Endothelial cell of umbilical vein (primary cell): ENCODE measurements at regions of chr1 and their contacts with region 1.

Region 1: DNA sequence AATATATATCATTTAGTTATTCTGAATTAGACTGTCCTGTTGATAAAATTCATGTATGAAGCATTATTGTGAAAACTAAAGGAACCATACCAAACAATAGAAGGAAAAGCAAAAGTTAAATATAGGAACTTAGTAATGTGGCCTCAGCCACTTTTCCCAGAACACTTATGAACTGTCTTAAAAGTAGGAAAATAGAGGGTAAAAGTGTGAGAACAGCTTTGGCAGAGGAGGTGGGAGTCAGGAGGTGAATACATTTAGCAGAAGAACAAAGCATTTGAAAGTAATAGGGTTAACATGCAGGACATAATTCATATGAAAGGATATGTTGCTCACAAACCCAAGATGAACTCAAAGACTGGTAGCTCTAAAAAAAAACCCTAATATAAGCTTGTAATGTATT is 121.9 kb downstream of the KCNT2 start:
- DNase-seq: peak; percentile 94
- H3K4me3 ChIP-seq: no peak overlapping the region
- H3K27ac ChIP-seq: no peak overlapping the region
- H3K4me1 ChIP-seq: peaks cover 5% of the 10 kb centered on the region
- H3K27me3 ChIP-seq: no peaks in the 10 kb centered on the region
- CTCF ChIP-seq: no peak
- POLR2A ChIP-seq: no peak

Region 2: DNA sequence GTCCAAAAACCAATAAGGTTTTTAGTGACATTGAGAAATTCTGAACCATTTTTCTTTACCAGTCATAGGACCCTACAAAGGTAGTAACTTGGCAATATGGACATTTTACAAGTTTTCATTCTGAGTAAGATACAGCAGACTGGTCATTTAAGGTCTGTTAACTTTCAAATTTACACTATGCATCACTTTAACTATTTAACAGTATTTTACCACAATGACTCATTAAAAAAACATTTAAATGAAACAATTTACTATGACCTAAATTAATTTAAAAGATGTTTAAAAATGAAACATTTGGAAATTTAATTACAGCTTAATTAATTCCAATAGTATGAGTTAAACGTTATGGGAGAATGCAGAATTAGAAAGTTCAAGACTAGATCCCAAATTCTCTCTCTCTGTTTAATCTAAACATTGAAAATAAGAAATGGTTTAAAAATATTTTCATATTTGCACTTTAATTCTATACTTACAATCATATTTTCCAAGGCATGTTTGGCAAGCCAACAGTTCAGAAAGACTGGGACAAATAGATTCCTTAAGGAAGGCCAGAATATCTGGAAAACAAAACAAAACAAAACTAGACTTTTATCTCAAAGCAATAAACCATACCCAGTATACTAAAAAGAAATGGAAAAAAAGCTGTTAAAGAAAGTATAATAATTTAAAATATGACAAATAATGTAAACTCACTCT is 19.0 kb before region 1 on chr1:
- CTCF ChIA-PET with region 1: no interaction called
- POLR2A ChIA-PET with region 1: no interaction called
- dilution Hi-C with region 1: no loop called
- intact Hi-C with region 1: no loop called
- DNase-seq: no peak
- H3K4me3 ChIP-seq: no peak overlapping the region
- H3K27ac ChIP-seq: no peak overlapping the region
- H3K4me1 ChIP-seq: no peaks in the 10 kb centered on the region
- H3K27me3 ChIP-seq: no peaks in the 10 kb centered on the region
- CTCF ChIP-seq: no peak
- POLR2A ChIP-seq: no peak

Region 3: GRCh38 chr1:196608390-196609369 is 122.3 kb after region 1 on chr1 and contains the start of gene KCNT2:
- CTCF ChIA-PET with region 1: no interaction called
- POLR2A ChIA-PET with region 1: no interaction called
- dilution Hi-C with region 1: no loop called
- intact Hi-C with region 1: loop called (anchors 5 kb)
- DNase-seq: peak; percentile 86
- H3K4me3 ChIP-seq: peak within 1 kb of the TSS; percentile 68 to 79 (median 69)
- H3K27ac ChIP-seq: no peak within 1 kb of the TSS
- H3K4me1 ChIP-seq: peaks cover 10% of the 10 kb centered on the region
- H3K27me3 ChIP-seq: no peaks in the 10 kb centered on the region
- CTCF ChIP-seq: peak in 1 of 2 donors; percentile 3
- POLR2A ChIP-seq: no peak
- total RNA-seq, gene KCNT2: 1.4 and 1.6 TPM in 2 replicates